Activated CD8-positive, alpha-beta T cell treated with anti-CD3 and anti-CD28 coated beads for 36 hours (primary cell): ENCODE measurements at regions of chr7 and their contacts with region 1.

Region 1: DNA sequence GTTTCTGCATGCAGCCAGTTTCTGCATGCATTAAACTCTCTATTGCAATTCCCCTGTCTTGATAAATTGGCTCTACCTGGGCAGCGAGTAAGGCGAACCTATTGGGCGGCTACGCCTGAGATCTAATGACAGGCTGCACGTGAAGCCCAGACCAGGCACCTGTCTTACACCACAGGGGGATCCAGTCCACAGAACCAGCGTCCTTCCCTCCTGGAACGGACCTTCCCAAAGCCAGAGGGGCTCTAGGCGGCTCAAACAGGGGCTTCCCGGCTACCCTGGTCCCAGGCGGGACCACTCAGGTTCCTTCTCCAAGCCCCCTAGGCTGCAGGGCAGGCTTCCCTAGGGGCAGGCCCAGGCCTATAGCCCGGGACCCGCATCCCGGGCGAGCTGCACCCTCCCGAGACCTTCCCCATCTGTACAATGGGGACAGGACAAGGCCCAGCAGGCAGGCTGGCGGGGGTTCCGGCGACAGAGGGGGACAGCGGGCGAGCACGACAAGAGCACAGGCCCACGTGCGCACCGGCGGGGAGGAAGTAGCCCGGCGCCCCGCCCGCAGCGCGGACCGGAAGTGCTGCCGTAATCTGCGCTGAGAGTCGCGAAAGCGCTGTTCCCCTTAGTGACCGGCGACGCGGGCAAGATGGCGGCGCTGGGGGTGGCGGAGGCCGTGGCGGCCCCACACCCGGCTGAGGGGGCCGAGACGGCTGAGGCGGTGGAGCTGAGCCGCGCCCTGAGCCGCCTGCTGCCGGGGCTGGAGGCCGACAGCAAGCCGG is at the start of gene DNAAF5:
- DNase-seq: peak; percentile 91
- ATAC-seq: peak; percentile 90
- H3K4me3 Mint-ChIP-seq: peak within 1 kb of the TSS; percentile 87
- H3K27ac Mint-ChIP-seq: peak within 1 kb of the TSS; percentile 82
- H3K4me1 Mint-ChIP-seq: peaks cover 36% of the 10 kb centered on the region
- H3K27me3 Mint-ChIP-seq: no peaks in the 10 kb centered on the region
- CTCF ChIP-seq: no peak
- total RNA-seq, gene DNAAF5: 36.4 to 36.8 TPM

Region 2: GRCh38 chr7:485188-486081 is 240.8 kb before region 1 on chr7:
- CTCF ChIA-PET with region 1: no interaction called
- POLR2A ChIA-PET with region 1: no interaction called
- intact Hi-C with region 1: no loop called
- DNase-seq: no peak
- ATAC-seq: no peak
- H3K4me3 Mint-ChIP-seq: no peak overlapping the region
- H3K27ac Mint-ChIP-seq: no peak overlapping the region
- H3K4me1 Mint-ChIP-seq: no peaks in the 10 kb centered on the region
- H3K27me3 Mint-ChIP-seq: peaks cover 6% of the 10 kb centered on the region
- CTCF ChIP-seq: no peak

Region 3: DNA sequence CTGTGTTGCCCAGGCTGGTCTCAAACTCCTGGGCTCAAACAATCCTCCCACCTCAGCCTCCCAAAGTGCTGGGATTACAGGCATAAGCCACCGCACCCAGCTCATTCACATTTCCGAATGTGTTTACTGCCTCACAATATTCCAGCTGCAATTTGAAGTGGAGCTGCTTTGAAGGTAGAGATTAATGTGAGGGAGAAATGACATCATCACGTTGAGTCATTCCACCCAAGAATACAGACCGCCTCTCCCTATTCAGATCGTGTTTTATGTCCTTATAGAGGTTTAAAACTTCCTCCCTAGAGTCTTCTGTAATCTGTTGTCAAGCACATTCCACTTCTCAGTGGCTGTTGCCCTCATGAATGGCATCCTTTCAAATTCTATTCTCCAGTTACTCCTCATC is 106.2 kb before region 1 on chr7:
- CTCF ChIA-PET with region 1: no interaction called
- POLR2A ChIA-PET with region 1: no interaction called
- intact Hi-C with region 1: loop called (anchors 5 kb)
- DNase-seq: peak; percentile 35
- ATAC-seq: peak; percentile 33
- H3K4me3 Mint-ChIP-seq: peak overlapping the region; percentile 23
- H3K27ac Mint-ChIP-seq: peak overlapping the region; percentile 100
- H3K4me1 Mint-ChIP-seq: peaks cover 44% of the 10 kb centered on the region
- H3K27me3 Mint-ChIP-seq: no peaks in the 10 kb centered on the region
- CTCF ChIP-seq: no peak

Region 4: DNA sequence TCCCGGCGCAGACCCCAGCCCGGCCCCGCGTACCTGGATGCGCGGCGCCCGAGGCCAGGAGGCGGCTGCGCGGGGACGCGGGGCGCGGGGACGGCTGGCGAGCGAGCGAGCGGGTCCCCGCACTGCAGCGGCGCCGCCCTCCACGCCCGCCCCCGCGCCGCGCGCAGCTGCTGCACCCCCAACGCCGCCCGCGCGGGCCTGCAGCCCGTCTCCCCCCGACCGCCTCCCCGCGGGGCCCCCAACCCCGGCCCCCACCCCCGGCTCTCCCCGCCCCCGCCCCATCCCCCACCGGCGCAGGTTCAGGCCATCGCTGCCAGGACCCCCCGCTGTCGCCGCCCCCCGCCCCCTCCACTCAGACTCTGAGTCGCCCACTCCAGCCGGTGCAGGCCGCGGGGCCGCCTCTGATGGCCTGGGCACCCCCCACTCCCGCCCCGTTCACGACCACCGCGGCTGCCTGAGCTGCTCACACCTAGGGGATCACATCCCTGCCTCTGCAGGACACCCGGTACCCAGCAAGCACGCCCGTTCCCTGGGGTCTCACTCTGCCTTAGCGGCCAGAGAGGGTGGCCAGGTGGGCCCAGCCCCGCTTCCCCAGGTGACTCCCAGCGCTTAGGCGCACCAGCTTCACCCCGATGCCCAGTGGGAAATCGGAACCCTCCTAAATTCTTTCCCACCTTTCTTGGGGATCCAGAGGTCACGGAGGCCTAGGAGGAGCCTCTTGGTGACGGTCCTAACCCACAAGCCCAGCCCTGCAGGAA is 13.7 kb before region 1 on chr7:
- CTCF ChIA-PET with region 1: no interaction called
- POLR2A ChIA-PET with region 1: no interaction called
- intact Hi-C with region 1: no loop called
- DNase-seq: no peak
- ATAC-seq: peak; percentile 70
- H3K4me3 Mint-ChIP-seq: peak overlapping the region; percentile 47
- H3K27ac Mint-ChIP-seq: no peak overlapping the region
- H3K4me1 Mint-ChIP-seq: peaks cover 19% of the 10 kb centered on the region
- H3K27me3 Mint-ChIP-seq: no peaks in the 10 kb centered on the region
- CTCF ChIP-seq: no peak

Region 5: DNA sequence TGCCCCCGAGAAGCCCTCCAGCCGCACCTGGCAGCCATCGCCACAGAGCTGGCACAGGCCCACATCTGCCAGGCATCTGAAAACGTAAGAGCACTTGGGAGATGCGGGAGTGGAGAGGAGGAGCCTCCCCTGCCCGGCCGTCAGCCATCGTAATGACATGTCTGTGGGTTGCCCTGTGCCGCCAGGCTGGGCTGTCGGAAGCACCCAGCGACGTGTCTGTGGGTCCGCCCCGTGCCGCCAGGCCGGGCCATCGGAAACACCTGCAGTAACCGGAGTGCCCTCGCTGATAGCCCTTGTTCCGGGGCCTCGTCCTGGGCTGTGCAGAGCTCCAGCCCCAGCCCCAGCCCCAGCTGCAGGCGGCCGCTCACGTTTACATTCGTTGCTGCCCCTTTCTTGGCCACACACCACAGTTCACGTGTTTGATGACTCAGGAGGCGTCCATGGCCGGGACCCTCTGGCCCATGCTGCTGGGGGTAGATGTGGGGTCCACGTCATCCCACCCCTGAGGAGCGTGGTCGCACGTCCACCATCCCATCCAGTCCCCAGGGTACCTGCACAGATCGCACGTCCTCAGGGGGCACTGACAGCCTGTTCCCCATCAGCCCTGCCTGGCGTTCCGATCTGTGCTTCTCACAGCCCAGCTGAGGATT is 30.8 kb after region 1 on chr7:
- CTCF ChIA-PET with region 1: no interaction called
- POLR2A ChIA-PET with region 1: no interaction called
- intact Hi-C with region 1: no loop called
- DNase-seq: no peak
- ATAC-seq: no peak
- H3K4me3 Mint-ChIP-seq: no peak overlapping the region
- H3K27ac Mint-ChIP-seq: no peak overlapping the region
- H3K4me1 Mint-ChIP-seq: no peaks in the 10 kb centered on the region
- H3K27me3 Mint-ChIP-seq: no peaks in the 10 kb centered on the region
- CTCF ChIP-seq: no peak